PC-9 (cell line): ENCODE measurements at regions of chr17 and their contacts with region 1.

Region 1: GRCh38 chr17:64975329-64976087 is 56.2 kb upstream of the LRRC37A3 start:
- DNase-seq: peak; percentile 87 to 98
- H3K4me3 ChIP-seq: peak overlapping the region; percentile 70
- H3K27ac ChIP-seq: peak overlapping the region; percentile 87
- H3K4me1 ChIP-seq: peaks cover 22% of the 10 kb centered on the region
- H3K27me3 ChIP-seq: no peaks in the 10 kb centered on the region
- CTCF ChIP-seq: no peak

Region 2: DNA sequence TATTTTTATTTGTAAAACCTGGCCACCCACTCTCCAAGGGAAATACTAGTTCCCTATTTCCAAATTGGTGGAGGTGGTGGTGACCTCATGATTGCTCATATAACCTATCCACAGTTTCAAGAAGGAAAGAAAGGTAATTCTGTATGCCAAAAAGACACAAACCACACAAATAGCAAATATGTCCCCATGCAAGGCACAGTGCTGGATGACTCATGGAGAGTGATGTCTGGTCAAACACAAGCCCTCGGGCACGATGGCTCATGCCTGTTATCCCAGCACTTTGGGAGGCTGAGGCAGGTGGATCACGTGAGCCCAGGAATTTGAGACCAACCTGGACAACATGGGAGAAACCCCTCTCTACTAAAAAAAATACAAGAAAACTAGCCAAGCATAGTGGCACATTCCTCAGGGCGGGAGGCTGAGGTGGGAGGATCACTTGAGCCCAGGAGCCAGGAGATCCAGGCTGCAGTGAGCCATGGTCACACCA is 16.9 kb after region 1 on chr17:
- CTCF ChIA-PET with region 1: no interaction called
- POLR2A ChIA-PET with region 1: interaction called, 3 read pairs
- intact Hi-C with region 1: loop called (anchors 1 kb)
- DNase-seq: peak; percentile 95 to 99
- H3K4me3 ChIP-seq: no peak overlapping the region
- H3K27ac ChIP-seq: peak overlapping the region; percentile 86
- H3K4me1 ChIP-seq: peaks cover 60% of the 10 kb centered on the region
- H3K27me3 ChIP-seq: no peaks in the 10 kb centered on the region
- CTCF ChIP-seq: no peak

Region 3: GRCh38 chr17:65027305-65027704 is 51.8 kb after region 1 on chr17:
- CTCF ChIA-PET with region 1: no interaction called
- POLR2A ChIA-PET with region 1: no interaction called
- intact Hi-C with region 1: loop called (anchors 5 kb)
- DNase-seq: peak; percentile 47 to 91
- H3K4me3 ChIP-seq: no peak overlapping the region
- H3K27ac ChIP-seq: peak overlapping the region; percentile 81
- H3K4me1 ChIP-seq: peaks cover 28% of the 10 kb centered on the region
- H3K27me3 ChIP-seq: no peaks in the 10 kb centered on the region
- CTCF ChIP-seq: peak; percentile 70

Region 4: GRCh38 chr17:65064452-65065019 is 89.0 kb after region 1 on chr17:
- CTCF ChIA-PET with region 1: no interaction called
- POLR2A ChIA-PET with region 1: interaction called, 20 read pairs
- intact Hi-C with region 1: no loop called
- DNase-seq: peak; percentile 42 to 90
- H3K4me3 ChIP-seq: no peak overlapping the region
- H3K27ac ChIP-seq: peak overlapping the region; percentile 86
- H3K4me1 ChIP-seq: peaks cover 59% of the 10 kb centered on the region
- H3K27me3 ChIP-seq: no peaks in the 10 kb centered on the region
- CTCF ChIP-seq: no peak

Region 5: GRCh38 chr17:65093930-65094329 is 118.4 kb after region 1 on chr17:
- CTCF ChIA-PET with region 1: no interaction called
- POLR2A ChIA-PET with region 1: no interaction called
- intact Hi-C with region 1: no loop called
- DNase-seq: no peak
- H3K4me3 ChIP-seq: no peak overlapping the region
- H3K27ac ChIP-seq: no peak overlapping the region
- H3K4me1 ChIP-seq: peaks cover 16% of the 10 kb centered on the region; the same call in 1 of the 2 replicates
- H3K27me3 ChIP-seq: no peaks in the 10 kb centered on the region
- CTCF ChIP-seq: no peak